MCF 10A (cell line): ENCODE measurements at regions of chr12 and their contacts with region 1.

Region 1: DNA sequence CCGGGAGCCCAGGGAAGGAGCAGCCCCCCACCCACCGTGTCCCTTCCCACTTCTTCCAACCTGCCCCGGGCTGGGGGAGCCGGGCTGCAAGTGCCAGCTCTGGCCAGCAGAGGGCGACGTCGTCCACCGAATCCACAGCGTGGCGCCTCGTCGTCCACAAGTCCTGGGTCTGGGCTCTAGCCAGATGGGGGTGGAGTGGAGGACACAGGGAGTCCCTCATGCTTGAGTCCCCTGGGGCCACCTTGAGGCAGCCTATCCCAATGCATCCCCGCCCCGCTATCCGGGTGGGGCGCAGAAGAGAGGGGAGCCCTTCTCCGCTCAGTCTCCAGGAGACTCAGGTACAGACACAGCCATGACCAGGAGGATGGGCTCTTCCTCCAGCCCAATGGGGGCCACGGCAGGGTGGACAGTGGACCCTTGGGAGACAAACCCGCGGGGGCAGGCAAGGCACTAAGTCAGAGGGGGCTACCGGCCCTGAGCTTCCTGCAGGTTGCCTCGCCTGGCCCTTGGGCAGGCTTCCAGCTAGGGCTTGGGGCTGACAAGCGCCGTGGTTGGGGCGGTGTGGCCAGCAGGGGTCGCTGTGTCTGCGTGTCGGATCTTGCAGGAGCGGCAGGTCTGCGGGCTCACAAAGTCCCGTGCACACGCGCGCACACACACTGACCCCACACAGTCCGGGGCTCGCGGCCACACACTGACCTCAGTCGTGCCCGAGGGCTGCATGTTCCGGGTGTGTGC is 5.5 kb downstream of the AQP5 start:
- DNase-seq: peak; percentile 85
- H3K4me3 Mint-ChIP-seq: peak overlapping the region; percentile 68
- H3K27ac Mint-ChIP-seq: no peak overlapping the region
- H3K4me1 Mint-ChIP-seq: peaks cover 10% of the 10 kb centered on the region
- H3K27me3 Mint-ChIP-seq: no peaks in the 10 kb centered on the region
- CTCF ChIP-seq: peak; percentile 87

Region 2: DNA sequence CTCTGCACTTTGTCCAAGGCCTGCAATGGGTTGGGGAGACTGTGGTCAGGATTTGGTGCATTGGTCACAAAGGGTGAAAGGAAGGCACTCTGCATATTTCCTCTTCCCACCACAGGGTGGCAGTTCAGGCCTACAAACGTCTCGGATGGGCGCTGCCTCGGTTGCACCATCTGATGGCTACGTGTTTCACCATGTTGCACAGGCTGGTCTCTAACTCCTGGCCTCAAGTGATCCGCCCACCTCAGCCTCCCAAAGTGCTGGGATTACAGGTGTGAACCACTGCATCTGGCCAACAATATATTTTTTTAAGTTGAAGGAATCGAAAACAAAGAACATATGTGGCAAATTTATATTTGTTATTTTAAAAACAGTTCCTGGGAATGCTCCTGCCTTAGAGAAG is 190.8 kb before region 1 on chr12:
- CTCF ChIA-PET with region 1: interaction called, 3 read pairs
- POLR2A ChIA-PET with region 1: no interaction called
- intact Hi-C with region 1: loop called (anchors 1 kb)
- DNase-seq: peak; percentile 82
- H3K4me3 Mint-ChIP-seq: no peak overlapping the region
- H3K27ac Mint-ChIP-seq: peak overlapping the region; percentile 42
- H3K4me1 Mint-ChIP-seq: peaks cover 17% of the 10 kb centered on the region
- H3K27me3 Mint-ChIP-seq: peaks cover 20% of the 10 kb centered on the region
- CTCF ChIP-seq: peak; percentile 92

Region 3: GRCh38 chr12:49945394-49946080 is 21.7 kb before region 1 on chr12:
- CTCF ChIA-PET with region 1: interaction called, 10 read pairs
- POLR2A ChIA-PET with region 1: no interaction called
- intact Hi-C with region 1: no loop called
- DNase-seq: peak; percentile 77
- H3K4me3 Mint-ChIP-seq: no peak overlapping the region
- H3K27ac Mint-ChIP-seq: peak overlapping the region; percentile 47
- H3K4me1 Mint-ChIP-seq: peaks cover 19% of the 10 kb centered on the region
- H3K27me3 Mint-ChIP-seq: no peaks in the 10 kb centered on the region
- CTCF ChIP-seq: peak; percentile 83

Region 4: DNA sequence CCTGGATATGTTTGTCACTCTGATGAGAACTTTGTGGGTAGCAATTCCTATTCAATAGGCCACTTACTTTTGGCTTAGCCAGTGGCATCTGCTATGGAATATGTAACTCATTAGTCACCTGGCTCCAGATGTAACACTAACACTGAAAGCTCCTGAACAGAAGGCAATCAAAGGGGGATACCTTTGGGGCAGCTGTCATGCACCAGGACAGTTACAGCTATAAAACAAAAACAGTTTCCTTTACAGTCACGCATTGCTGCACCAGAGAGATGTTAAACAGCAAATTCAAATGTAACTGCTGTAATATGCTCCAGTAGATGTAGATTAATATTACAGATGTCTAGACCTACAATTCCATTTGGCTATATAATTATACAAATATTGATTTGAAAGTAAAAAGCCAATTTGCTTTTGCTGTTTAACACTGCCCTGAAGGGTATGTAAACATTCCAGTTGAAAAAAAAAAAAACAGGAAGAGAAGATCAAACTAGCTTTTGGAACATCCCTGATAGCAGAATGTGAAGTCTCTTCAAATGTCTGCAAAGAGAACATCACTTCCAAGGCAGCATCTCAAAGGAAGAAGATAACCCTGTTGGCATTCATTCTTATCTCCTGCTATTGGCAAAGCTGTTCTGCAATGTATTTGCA is 39.7 kb after region 1 on chr12:
- CTCF ChIA-PET with region 1: interaction called, 24 read pairs
- POLR2A ChIA-PET with region 1: interaction called, 3 read pairs
- intact Hi-C with region 1: no loop called
- DNase-seq: no peak
- H3K4me3 Mint-ChIP-seq: no peak overlapping the region
- H3K27ac Mint-ChIP-seq: no peak overlapping the region
- H3K4me1 Mint-ChIP-seq: peaks cover 11% of the 10 kb centered on the region
- H3K27me3 Mint-ChIP-seq: no peaks in the 10 kb centered on the region
- CTCF ChIP-seq: no peak

Region 5: GRCh38 chr12:50055831-50056638 is 88.8 kb after region 1 on chr12:
- CTCF ChIA-PET with region 1: interaction called, 90 read pairs
- POLR2A ChIA-PET with region 1: interaction called, 14 read pairs
- intact Hi-C with region 1: loop called (anchors 1 kb)
- DNase-seq: peak; percentile 61
- H3K4me3 Mint-ChIP-seq: peak overlapping the region; percentile 90
- H3K27ac Mint-ChIP-seq: peak overlapping the region; percentile 3
- H3K4me1 Mint-ChIP-seq: peaks cover 18% of the 10 kb centered on the region
- H3K27me3 Mint-ChIP-seq: peaks cover 35% of the 10 kb centered on the region
- CTCF ChIP-seq: peak; percentile 97

Region 6: DNA sequence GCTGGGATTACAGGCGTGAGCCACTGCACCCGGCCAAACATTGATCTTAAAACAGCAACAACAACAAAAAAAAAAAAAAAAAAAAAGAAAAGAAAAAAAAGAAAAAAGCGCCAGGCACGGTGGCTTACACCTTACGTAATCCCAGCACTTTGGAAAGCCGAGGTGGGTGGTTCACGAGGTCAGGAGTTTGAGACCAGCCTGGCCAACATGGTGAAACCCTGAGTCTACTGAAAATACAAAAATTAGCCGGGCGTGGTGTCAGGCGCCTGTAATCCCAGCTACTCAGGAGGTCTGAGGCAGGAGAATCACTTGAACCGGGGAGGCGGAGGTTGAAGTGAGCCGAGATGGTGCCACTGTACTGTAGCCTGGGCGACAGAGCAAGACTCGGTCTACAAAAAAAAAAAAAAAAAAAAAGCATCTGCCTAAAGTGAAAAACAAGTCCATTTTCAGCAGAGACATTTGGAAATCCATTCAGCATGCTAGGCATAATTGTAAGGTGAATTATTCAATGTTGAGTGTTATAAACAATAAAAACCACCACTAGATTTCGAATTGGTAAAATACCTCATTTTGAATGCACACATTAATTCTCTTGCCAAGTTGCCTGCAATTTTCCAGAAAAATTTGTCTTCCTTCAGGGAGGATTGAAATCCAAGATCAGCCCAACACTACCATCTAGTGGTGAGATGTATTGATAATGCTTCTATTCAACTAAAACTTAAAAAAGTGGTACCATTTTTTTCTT is 207.9 kb after region 1 on chr12:
- CTCF ChIA-PET with region 1: interaction called, 4 read pairs
- POLR2A ChIA-PET with region 1: no interaction called
- intact Hi-C with region 1: loop called (anchors 10 kb)
- DNase-seq: peak; percentile 81
- H3K4me3 Mint-ChIP-seq: no peak overlapping the region
- H3K27ac Mint-ChIP-seq: no peak overlapping the region
- H3K4me1 Mint-ChIP-seq: no peaks in the 10 kb centered on the region
- H3K27me3 Mint-ChIP-seq: no peaks in the 10 kb centered on the region
- CTCF ChIP-seq: peak; percentile 64

Region 7: GRCh38 chr12:50400598-50401364 is 433.6 kb after region 1 on chr12 and contains the start of gene LARP4:
- CTCF ChIA-PET with region 1: no interaction called
- POLR2A ChIA-PET with region 1: no interaction called
- intact Hi-C with region 1: no loop called
- DNase-seq: peak; percentile 96
- H3K4me3 Mint-ChIP-seq: peak within 1 kb of the TSS; percentile 97
- H3K27ac Mint-ChIP-seq: peak within 1 kb of the TSS; percentile 89
- H3K4me1 Mint-ChIP-seq: peaks cover 7% of the 10 kb centered on the region
- H3K27me3 Mint-ChIP-seq: no peaks in the 10 kb centered on the region
- CTCF ChIP-seq: no peak
- total RNA-seq, gene LARP4: 73.6 and 78.8 TPM in 2 replicates